ENCODE measurements at regions of chr2 and their contacts with region 1.

Region 1: DNA sequence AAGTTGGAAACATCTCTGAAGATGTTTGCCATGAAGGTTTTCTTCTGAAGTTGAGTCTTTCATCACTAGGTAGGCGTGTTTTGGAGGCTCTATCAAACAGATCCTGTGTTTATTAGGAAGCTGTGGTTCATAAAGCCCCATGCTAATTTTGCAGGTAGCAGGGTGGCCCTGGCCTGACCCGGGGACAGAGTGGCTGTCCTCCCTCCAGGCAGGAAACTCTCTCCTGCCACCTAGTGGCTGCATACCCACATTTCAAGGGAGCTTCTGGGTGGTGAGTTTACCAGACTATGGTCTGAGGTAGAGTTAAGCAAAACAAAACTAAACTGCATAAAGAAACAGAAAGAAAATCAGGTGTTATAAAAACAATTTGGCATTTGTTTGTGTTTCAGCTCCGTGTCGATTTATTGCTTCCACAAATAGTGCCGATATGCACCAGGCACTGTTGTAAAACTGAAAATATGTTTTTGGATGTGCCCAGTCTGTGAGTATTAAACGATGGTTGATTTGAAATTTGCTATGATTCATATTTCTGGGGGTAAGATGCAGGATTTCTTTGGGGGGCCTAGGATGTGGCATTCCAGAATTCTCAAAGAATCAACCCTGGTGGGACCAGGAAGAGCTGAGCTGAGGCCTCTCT is 26.0 kb upstream of the IL37 start:
- DNase-seq: peak; percentile 8 to 77 (median 50)
- ATAC-seq: peak; percentile 83
- H3K4me3 ChIP-seq: no peak overlapping the region
- H3K4me3 Mint-ChIP-seq: peak overlapping the region in 1 of 10 donors; percentile 61
- H3K27ac ChIP-seq: no peak overlapping the region
- H3K27ac Mint-ChIP-seq: peak overlapping the region in 2 of 9 donors; percentile 45 to 81
- H3K4me1 ChIP-seq: no peaks in the 10 kb centered on the region
- H3K4me1 Mint-ChIP-seq: peaks cover 0 to 31% (median 10%) of the 10 kb centered on the region in 7 donors
- H3K27me3 ChIP-seq: no peaks in the 10 kb centered on the region
- H3K27me3 Mint-ChIP-seq: no peaks in the 10 kb centered on the region

Region 2: GRCh38 chr2:112606488-112606902 is 278.5 kb before region 1 on chr2:
- CTCF ChIA-PET with region 1: interaction called, 3 read pairs
- POLR2A ChIA-PET with region 1: no interaction called
- intact Hi-C with region 1: loop called in 1 of 2 experiments (anchors 10 kb)
- DNase-seq: no peak
- ATAC-seq: no peak
- H3K4me3 ChIP-seq: no peak overlapping the region
- H3K4me3 Mint-ChIP-seq: no peak overlapping the region
- H3K27ac ChIP-seq: no peak overlapping the region
- H3K27ac Mint-ChIP-seq: peak overlapping the region in 1 of 9 donors; percentile 45
- H3K4me1 ChIP-seq: no peaks in the 10 kb centered on the region
- H3K4me1 Mint-ChIP-seq: peaks cover 0 to 3% (median 0%) of the 10 kb centered on the region in 7 donors
- H3K27me3 ChIP-seq: no peaks in the 10 kb centered on the region
- H3K27me3 Mint-ChIP-seq: peaks cover 0 to 21% (median 0%) of the 10 kb centered on the region in 5 donors

Region 3: DNA sequence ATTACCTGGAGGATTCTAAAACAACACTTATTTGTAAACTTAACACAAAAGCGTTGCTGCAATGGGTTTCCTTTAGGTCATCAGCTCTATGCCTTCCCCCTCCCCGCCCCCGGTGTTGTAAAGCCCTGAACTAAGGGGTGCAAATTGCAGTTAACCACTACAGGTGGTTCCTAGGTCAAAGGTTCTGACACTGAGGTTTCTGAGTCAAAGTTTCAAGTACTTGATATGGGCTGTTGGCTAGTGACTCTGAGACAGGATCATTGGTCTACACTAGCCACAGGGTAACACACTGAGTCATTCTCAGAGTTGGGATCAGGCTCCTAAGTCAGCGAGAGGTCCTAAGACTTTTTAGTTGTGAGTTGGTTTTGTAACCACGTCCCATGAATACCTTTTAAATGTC is 63.8 kb before region 1 on chr2:
- CTCF ChIA-PET with region 1: no interaction called
- POLR2A ChIA-PET with region 1: no interaction called
- intact Hi-C with region 1: loop called in 1 of 2 experiments (anchors 10 kb)
- DNase-seq: peak in 1 of 9 donors; percentile 60
- ATAC-seq: no peak
- H3K4me3 ChIP-seq: no peak overlapping the region
- H3K4me3 Mint-ChIP-seq: peak overlapping the region in 1 of 10 donors; percentile 66
- H3K27ac ChIP-seq: no peak overlapping the region
- H3K27ac Mint-ChIP-seq: peak overlapping the region in 1 of 9 donors; percentile 82
- H3K4me1 ChIP-seq: no peaks in the 10 kb centered on the region
- H3K4me1 Mint-ChIP-seq: peaks cover 5 to 26% (median 13%) of the 10 kb centered on the region in 7 donors
- H3K27me3 ChIP-seq: no peaks in the 10 kb centered on the region
- H3K27me3 Mint-ChIP-seq: no peaks in the 10 kb centered on the region

Region 4: GRCh38 chr2:112839407-112840067 is 45.5 kb before region 1 on chr2:
- CTCF ChIA-PET with region 1: no interaction called
- POLR2A ChIA-PET with region 1: no interaction called
- intact Hi-C with region 1: no loop called
- DNase-seq: no peak
- ATAC-seq: peak; percentile 70
- H3K4me3 ChIP-seq: no peak overlapping the region
- H3K4me3 Mint-ChIP-seq: no peak overlapping the region
- H3K27ac ChIP-seq: no peak overlapping the region
- H3K27ac Mint-ChIP-seq: no peak overlapping the region
- H3K4me1 ChIP-seq: no peaks in the 10 kb centered on the region
- H3K4me1 Mint-ChIP-seq: peaks cover 0 to 11% (median 0%) of the 10 kb centered on the region in 7 donors
- H3K27me3 ChIP-seq: no peaks in the 10 kb centered on the region
- H3K27me3 Mint-ChIP-seq: peaks cover 12 to 53% (median 22%) of the 10 kb centered on the region in 5 donors